ENCODE measurements at regions of chr1 and their contacts with region 1.

Region 1: DNA sequence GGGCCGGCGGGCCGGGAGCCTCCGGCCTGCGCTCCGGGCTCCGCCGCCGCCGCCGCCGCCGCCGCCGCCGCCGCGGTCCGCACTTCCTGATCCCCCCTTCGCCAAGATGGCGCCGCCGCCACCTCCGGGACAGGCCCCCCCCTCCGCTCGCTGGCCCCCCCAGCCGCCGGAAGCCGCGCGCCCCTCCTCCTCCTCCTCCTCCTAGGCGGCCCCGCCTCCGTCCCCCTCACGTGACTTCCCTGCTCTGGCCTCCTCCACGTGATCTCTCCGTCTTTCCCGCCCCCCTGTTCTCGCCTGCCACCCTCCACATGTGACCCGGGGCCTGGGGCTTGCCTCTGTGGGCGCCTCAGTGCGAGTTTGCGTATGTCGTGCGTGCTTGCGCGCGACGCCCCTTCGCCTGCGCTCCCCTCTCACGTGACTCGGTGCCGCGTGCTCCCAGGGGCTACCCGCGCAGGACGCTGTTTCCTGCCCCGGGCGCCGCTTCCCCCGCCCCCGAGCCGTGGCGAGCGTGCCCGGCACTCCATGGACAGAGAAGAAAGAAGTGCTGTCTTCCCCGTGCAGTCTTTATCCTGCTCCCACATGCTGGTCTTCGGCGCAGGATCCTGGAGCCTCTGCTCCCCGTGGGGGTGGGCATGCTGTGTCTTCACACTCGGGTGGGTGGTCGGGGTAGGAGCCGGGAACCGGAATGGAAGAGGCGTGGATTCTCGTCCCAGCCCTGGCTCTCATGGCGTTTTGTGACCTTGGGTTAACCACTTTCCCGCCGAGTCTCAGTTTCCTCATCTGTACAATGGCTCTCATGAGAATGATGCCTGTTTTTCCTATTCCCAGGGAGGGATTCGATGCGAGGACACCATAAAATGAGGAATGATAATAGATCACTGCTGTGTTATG is at the start of gene UBE2Q1:
- DNase-seq: peak; percentile 99 to 100
- H3K4me3 ChIP-seq: peak within 1 kb of the TSS; percentile 90 to 94
- H3K27ac ChIP-seq: peak within 1 kb of the TSS; percentile 86 to 91
- H3K4me1 ChIP-seq: peaks cover 0 to 28% (median 18%) of the 10 kb centered on the region in 4 donors
- H3K27me3 ChIP-seq: no peaks in the 10 kb centered on the region
- CTCF ChIP-seq: no peak

Region 2: DNA sequence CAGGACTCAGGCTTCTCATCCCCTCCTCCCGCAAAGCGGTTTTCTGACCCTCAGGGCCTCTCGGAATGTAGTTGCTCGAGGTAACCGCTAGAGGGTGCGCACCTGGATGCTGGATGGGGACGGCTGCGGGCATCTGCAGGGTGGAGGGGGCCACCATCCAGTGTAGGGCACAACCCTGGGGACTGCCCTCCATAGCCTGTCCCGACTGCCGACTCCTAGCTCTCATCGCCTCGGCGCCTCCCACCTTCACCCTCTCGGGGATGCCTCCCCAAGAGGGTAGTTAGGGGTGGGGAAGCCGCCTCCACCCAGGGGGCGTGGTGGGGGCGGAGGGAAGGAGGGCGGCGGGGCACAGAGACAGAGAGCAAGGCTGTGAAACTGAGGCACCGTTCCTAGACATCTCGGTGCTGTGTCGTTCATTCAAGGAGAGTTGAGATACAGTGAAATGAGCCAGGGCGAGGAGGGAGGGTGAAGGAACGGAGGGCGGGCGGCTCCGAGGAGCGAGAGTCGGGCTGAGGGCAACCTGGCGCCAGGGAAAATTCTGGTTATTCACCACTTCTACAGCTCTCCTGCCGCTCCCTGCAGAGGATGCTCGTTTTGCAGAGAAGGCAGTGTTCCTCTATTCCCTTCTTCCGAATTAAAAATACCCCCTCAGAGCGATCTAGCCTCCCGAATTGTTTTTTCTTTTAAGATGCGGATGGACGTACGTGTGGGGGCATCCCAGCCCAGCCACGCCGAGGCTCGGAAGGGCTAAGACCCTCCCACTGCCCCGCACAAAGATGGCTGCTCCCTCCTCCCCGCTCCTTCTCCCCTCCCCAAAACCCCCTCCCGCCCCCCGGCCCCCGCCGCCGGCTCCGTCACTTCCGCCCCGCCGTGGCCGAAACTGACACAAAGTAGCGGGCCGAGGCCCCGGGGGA is 233.9 kb before region 1 on chr1 and contains the start of gene ATP8B2:
- intact Hi-C with region 1: loop called (anchors 10 kb)
- DNase-seq: peak; percentile 72 to 89
- H3K4me3 ChIP-seq: peak within 1 kb of the TSS; percentile 72 to 90
- H3K27ac ChIP-seq: peak within 1 kb of the TSS; percentile 96 to 99
- H3K4me1 ChIP-seq: peaks cover 6 to 45% (median 32%) of the 10 kb centered on the region in 4 donors
- H3K27me3 ChIP-seq: no peaks in the 10 kb centered on the region
- CTCF ChIP-seq: peak; percentile 91 to 93

Region 3: GRCh38 chr1:154627257-154628120 is 68.7 kb after region 1 on chr1:
- intact Hi-C with region 1: loop called (anchors 10 kb)
- DNase-seq: peak; percentile 89 to 90
- H3K4me3 ChIP-seq: peak overlapping the region; percentile 82 to 87
- H3K27ac ChIP-seq: peak overlapping the region; percentile 94
- H3K4me1 ChIP-seq: peaks cover 0 to 18% (median 10%) of the 10 kb centered on the region in 4 donors
- H3K27me3 ChIP-seq: no peaks in the 10 kb centered on the region
- CTCF ChIP-seq: no peak

Region 4: DNA sequence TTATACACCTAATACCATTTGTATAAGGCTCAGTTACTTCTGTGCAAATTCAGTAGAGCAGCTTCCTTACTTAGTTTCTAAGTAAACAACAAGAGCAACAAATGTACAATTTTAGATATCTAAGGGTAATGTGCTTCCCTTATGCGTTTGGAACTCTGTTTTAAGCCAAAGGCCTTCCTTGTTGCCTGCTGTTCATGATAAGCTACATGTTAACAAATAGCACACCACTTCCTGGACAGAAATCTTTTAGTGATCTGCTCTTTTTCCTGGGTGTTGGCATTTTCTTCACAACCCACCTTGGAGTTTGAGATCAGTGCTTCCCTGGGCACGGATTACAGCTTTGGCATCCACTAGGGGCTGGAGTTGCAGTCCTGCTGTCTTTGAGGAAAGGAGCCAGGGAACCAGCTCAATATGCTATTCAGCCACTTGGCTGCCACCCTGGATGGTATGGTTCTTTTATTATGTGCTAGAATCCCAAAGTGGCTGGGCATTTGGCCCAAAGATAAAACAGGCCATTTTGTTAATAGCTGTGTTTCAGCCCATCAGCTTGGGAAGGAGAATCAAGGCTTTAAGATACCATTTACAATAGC is 104.7 kb after region 1 on chr1:
- intact Hi-C with region 1: no loop called
- DNase-seq: no peak
- H3K4me3 ChIP-seq: no peak overlapping the region
- H3K27ac ChIP-seq: no peak overlapping the region
- H3K4me1 ChIP-seq: no peaks in the 10 kb centered on the region
- H3K27me3 ChIP-seq: peaks cover 0 to 9% of the 10 kb centered on the region in 2 donors
- CTCF ChIP-seq: no peak

Region 5: GRCh38 chr1:154760469-154760933 is 201.7 kb after region 1 on chr1:
- intact Hi-C with region 1: loop called (anchors 1 kb)
- DNase-seq: no peak
- H3K4me3 ChIP-seq: peak overlapping the region; percentile 4 to 28
- H3K27ac ChIP-seq: no peak overlapping the region
- H3K4me1 ChIP-seq: peaks cover 0 to 7% (median 7%) of the 10 kb centered on the region in 4 donors
- H3K27me3 ChIP-seq: peaks cover 3 to 51% of the 10 kb centered on the region in 2 donors
- CTCF ChIP-seq: peak; percentile 49 to 64

Region 6: DNA sequence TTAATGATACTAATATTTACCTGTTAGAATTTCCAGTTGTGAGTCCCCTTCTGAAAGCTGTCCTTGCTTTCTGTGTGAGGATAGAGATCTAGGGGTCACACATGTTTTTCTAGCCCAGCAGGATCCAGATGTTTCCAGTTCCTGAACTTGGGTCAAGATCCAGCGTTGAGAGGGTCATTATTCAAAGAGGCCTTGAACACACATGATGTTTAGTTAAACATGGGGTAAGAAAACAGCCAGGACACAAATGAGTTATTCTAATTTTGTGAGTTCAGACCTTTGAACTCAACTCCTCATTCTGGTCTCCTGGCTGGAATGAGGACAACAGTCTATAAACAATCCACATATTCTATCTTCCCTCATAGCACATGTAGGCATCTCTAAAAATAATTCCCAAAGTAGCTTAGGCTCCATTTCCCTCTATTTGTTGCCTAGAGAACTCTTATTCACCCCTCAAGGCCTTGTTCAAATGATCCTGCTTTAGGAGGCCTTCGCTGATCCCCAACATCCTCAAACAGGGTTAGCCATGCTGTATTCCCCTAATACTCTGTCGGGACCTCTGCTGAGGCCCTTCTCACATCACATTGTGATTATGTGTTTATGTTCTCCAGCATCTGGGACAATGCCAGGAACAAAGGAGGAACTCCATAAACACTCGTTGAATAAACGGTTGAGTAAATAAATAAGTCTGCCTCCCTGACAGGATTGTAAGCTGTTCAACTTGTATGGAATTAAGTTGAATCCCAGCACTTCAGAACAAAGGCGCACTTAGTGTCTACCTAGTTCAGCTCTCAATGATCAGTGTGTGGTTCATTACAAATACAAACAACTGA is 326.3 kb after region 1 on chr1:
- intact Hi-C with region 1: loop called (anchors 2 kb)
- DNase-seq: no peak
- H3K4me3 ChIP-seq: no peak overlapping the region
- H3K27ac ChIP-seq: no peak overlapping the region
- H3K4me1 ChIP-seq: no peaks in the 10 kb centered on the region
- H3K27me3 ChIP-seq: no peaks in the 10 kb centered on the region
- CTCF ChIP-seq: no peak

Measured in tibial artery (tissue), 4 donors.